ENCODE measurements at regions of chr11 and their contacts with region 1.

Region 1: DNA sequence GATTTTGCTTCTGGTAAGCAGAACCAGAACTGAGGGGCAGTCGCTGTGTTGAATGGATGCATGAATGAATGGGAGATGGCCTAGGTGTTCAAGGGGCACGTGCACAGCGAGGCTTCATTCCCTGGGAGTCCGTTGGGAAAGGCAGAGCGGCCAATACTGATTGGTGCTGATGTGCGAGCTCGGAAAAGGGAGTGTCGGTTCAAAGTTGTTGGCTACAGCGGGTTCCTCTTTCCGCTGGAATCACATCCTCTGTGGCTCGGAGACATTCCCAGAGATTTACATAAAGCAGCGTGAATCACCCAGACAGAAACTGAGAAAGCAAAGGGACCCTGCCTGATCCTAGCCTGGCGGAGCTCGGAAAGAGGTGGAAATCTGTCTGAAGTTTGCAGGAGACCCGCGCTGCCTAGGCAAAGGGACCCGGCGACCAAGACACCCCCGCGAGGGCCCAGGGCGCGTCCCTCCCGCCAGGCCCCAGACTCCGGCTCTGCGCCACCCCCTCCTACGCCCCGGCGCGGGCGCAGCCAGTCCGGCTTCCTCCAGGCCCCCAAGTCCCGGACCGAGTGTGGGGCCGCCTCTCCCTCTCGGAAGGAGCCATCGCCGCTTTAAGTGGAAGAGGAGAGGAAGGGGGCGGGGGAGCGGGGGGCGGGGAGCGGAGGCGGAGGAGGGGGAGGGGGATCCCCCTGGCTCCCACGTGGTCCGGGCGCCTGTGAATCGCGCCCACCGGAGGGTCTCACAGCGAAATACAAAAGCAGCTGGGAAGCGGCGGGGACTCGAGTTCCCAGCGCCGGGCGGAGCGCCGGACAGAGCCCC is at the start of gene FJX1:
- DNase-seq: peak; percentile 55 to 71 (median 57)
- H3K4me3 ChIP-seq: peak within 1 kb of the TSS in 2 of 4 donors; percentile 39 to 78
- H3K27ac ChIP-seq: peak within 1 kb of the TSS in 4 of 5 donors; percentile 70 to 93 (median 78)
- H3K4me1 ChIP-seq: peaks cover 17 to 24% of the 10 kb centered on the region in 2 donors
- H3K27me3 ChIP-seq: no peaks in the 10 kb centered on the region
- CTCF ChIP-seq: no peak
- POLR2A ChIP-seq: peak in 1 of 2 donors; percentile 38
- total RNA-seq, gene FJX1: 4.3 to 37.1 (median 10.4) TPM

Region 2: GRCh38 chr11:35815556-35816315 is 197.8 kb after region 1 on chr11:
- intact Hi-C with region 1: loop called (anchors 10 kb)
- DNase-seq: peak in 6 of 7 donors; percentile 13 to 57 (median 33)
- H3K4me3 ChIP-seq: no peak overlapping the region
- H3K27ac ChIP-seq: peak overlapping the region in 2 of 5 donors; percentile 11 to 18
- H3K4me1 ChIP-seq: peaks cover 0 to 33% of the 10 kb centered on the region in 2 donors
- H3K27me3 ChIP-seq: no peaks in the 10 kb centered on the region
- CTCF ChIP-seq: no peak
- POLR2A ChIP-seq: no peak

Region 3: GRCh38 chr11:35822815-35823495 is 205.1 kb after region 1 on chr11:
- intact Hi-C with region 1: loop called (anchors 10 kb)
- DNase-seq: no peak
- H3K4me3 ChIP-seq: no peak overlapping the region
- H3K27ac ChIP-seq: no peak overlapping the region
- H3K4me1 ChIP-seq: peaks cover 0 to 21% of the 10 kb centered on the region in 2 donors
- H3K27me3 ChIP-seq: no peaks in the 10 kb centered on the region
- CTCF ChIP-seq: no peak
- POLR2A ChIP-seq: no peak

Region 4: DNA sequence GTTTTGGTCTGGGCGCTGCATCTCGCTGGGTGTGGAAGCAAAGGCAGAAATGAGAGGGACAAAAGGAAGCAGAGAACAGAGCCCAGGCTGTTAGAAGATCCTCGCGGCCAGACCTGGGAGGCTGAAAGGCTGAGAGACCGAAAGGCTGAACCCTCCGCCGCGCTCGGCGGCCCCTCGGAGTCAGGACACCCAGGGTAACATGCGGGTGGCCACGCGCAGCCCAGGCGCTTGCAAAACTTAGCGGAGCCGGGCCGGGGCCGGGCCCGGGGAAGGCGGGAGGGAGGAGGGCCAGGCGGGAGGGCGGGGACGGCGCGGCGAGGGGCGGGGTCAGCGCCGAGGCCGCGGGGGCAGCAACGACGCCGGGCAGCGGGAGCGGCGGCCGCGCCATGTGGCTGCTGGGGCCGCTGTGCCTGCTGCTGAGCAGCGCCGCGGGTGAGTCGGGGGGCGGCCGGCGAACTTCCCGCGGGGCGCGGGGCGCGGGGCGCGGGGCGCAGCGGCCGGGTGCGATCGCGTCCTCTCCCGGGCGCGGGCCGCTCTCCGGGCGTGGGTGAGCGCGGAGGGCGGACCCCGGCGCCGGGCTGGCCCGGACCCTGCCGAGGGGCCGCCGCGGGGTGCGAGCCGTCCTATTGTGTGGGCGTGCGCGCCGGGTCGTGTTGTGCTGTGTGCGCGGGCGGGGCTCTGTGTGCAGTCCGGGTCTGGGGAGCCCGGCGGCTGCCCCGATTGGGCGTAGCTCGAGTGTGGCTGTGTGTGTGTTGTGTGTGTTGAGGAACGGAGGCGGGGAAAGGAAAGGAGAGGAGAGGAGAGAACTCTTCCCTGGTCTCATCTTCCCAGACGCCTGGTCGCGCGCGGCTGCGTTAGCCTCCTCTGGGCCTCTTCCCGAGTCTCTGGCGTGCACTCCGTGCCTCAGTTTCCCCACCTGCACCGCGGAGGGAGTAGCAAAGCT is 326.1 kb after region 1 on chr11 and contains the start of gene LDLRAD3:
- intact Hi-C with region 1: loop called in 1 of 2 experiments (anchors 10 kb)
- DNase-seq: peak; percentile 78 to 85 (median 84)
- H3K4me3 ChIP-seq: peak within 1 kb of the TSS; percentile 16 to 74 (median 41)
- H3K27ac ChIP-seq: peak within 1 kb of the TSS in 4 of 5 donors; percentile 63 to 91 (median 79)
- H3K4me1 ChIP-seq: peaks cover 0 to 18% of the 10 kb centered on the region in 2 donors
- H3K27me3 ChIP-seq: no peaks in the 10 kb centered on the region
- CTCF ChIP-seq: no peak
- POLR2A ChIP-seq: peak in 1 of 2 donors; percentile 34
- total RNA-seq, gene LDLRAD3: 6.1 to 16.4 (median 10.4) TPM

Region 5: DNA sequence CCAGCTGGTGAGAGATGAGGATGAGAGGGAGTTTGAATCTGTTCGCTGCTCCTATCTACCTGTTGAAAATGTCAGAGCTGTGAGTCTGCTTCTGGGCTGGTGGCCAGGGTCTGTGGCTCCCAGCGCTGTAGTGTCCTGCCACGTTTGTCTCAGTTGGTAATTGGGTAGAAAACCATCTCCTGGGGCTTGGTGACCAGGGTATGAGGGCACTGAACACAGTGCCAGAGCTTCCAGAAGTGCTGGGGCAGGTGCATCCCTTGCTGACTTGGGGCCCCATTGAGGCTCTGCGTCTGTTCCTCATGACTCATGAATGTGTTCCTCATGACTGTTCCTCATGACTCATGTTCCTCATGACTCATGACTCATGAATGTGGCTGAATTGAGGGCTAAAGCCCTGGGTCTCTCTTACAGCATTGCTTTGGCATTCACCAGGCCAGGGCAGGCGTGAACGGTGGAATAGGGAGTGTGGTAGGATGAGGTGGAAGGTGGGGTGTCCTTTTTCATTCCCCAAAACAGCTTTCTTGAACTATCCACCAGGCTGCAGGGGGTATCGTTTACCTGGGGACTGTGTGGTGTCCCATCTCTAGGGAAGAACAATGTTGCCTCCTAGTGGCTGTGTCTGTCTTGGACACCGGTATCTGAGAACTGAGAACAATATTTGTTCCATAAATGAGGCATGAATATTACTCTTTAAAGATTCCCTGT is 531.8 kb after region 1 on chr11:
- intact Hi-C with region 1: loop called in 1 of 2 experiments (anchors 10 kb)
- DNase-seq: peak; percentile 67 to 87 (median 84)
- H3K4me3 ChIP-seq: no peak overlapping the region
- H3K27ac ChIP-seq: peak overlapping the region in 3 of 5 donors; percentile 25 to 76 (median 48)
- H3K4me1 ChIP-seq: peaks cover 10 to 12% of the 10 kb centered on the region in 2 donors
- H3K27me3 ChIP-seq: no peaks in the 10 kb centered on the region
- CTCF ChIP-seq: peak; percentile 27 to 67 (median 51)
- POLR2A ChIP-seq: peak in 1 of 2 donors; percentile 63